Activated T-helper 2 cell treated with anti-CD3 and anti-CD28 coated beads, Interferon-gamma antibody, Interleukin-2, Interleukin-4, amounts not matched to agents 10 μg/mL and 5 μg/mL and 100 μg/mL, durations not matched to agents 14 hours and 24 hours and 36 hours (primary cell): ENCODE measurements at regions of chr6 and their contacts with region 1.

Region 1: GRCh38 chr6:15420959-15421438 is 175.1 kb downstream of the JARID2 start:
- DNase-seq: no peak
- H3K4me3 Mint-ChIP-seq: peak overlapping the region; percentile 53
- H3K27ac Mint-ChIP-seq: peak overlapping the region; percentile 89
- H3K4me1 Mint-ChIP-seq: peaks cover 68% of the 10 kb centered on the region
- H3K27me3 Mint-ChIP-seq: no peaks in the 10 kb centered on the region

Region 2: DNA sequence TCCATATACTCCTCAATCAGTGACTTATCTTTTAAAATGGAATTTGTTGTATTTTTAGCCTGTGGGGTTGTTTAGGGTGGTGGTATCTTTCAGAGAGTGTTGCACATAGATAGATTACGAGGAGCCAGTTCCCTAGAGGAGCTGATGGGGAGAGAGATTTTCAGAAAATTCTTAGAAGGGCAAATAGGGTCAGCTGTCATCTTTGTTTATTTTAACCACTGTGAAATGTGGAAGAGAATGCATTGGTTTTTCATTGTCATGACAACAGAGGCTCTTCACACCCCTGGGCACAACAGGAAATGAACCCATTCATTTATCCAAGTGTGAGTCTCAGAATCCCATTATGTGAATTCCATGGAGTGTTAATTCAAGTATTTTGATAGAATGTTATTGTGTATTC is 13.3 kb after region 1 on chr6:
- intact Hi-C with region 1: loop called (anchors 2 kb)
- DNase-seq: no peak
- H3K4me3 Mint-ChIP-seq: peak overlapping the region; percentile 34
- H3K27ac Mint-ChIP-seq: peak overlapping the region; percentile 82
- H3K4me1 Mint-ChIP-seq: peaks cover 87% of the 10 kb centered on the region
- H3K27me3 Mint-ChIP-seq: no peaks in the 10 kb centered on the region